ENCODE measurements at regions of chr16 and their contacts with region 1.

Region 1: GRCh38 chr16:57306676-57307341 is 22.3 kb upstream of the PLLP start:
- DNase-seq: peak in 1 of 2 donors; percentile 48
- H3K4me3 ChIP-seq: no peak overlapping the region
- CTCF ChIP-seq: no peak
- POLR2A ChIP-seq: no peak

Region 2: GRCh38 chr16:57204675-57205074 is 102.1 kb before region 1 on chr16:
- intact Hi-C with region 1: no loop called
- DNase-seq: no peak
- H3K4me3 ChIP-seq: no peak overlapping the region
- CTCF ChIP-seq: no peak
- POLR2A ChIP-seq: no peak

Region 3: DNA sequence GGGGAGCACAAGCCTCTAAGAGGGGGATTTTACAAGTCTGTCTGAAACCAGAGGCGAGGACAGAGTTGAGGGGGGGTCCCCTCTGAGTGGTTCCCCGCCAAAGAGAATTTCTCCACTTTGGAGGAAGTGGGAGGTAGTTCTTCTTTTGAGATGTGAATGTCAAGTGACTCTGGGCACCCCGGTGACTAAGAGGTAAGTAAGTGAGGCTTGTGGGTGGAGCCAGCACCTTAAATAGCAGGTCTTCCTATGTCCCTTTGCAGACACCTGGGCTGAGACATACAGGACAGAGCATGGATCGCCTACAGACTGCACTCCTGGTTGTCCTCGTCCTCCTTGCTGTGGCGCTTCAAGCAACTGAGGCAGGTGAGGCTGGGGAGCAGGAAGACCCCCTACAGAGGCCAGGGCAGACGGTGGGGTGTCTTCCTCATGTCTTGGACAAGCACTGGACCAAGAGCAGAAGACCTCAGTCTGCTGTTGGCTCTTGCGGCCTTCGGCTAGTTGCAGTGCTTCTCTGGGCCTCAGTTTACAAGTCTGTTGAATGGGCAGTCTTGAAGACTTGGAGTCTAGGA is 51.8 kb after region 1 on chr16 and contains the start of gene CCL22:
- intact Hi-C with region 1: loop called (anchors 2 kb)
- DNase-seq: peak in 1 of 2 donors; percentile 82
- H3K4me3 ChIP-seq: no peak within 1 kb of the TSS
- CTCF ChIP-seq: no peak
- POLR2A ChIP-seq: no peak
- total RNA-seq, gene CCL22: 0.99 to 10.1 (median 2.0) TPM

Region 4: GRCh38 chr16:57386381-57386951 is 79.7 kb after region 1 on chr16:
- intact Hi-C with region 1: no loop called
- DNase-seq: no peak
- H3K4me3 ChIP-seq: no peak overlapping the region
- CTCF ChIP-seq: no peak
- POLR2A ChIP-seq: no peak

Region 5: GRCh38 chr16:57422026-57422944 is 115.5 kb after region 1 on chr16:
- intact Hi-C with region 1: no loop called
- DNase-seq: peak in 1 of 2 donors; percentile 39
- H3K4me3 ChIP-seq: no peak overlapping the region
- CTCF ChIP-seq: no peak
- POLR2A ChIP-seq: no peak

Measured in lower leg skin (tissue), 4 donors.